ENCODE measurements at regions of chr1 and their contacts with region 1.

Region 1: DNA sequence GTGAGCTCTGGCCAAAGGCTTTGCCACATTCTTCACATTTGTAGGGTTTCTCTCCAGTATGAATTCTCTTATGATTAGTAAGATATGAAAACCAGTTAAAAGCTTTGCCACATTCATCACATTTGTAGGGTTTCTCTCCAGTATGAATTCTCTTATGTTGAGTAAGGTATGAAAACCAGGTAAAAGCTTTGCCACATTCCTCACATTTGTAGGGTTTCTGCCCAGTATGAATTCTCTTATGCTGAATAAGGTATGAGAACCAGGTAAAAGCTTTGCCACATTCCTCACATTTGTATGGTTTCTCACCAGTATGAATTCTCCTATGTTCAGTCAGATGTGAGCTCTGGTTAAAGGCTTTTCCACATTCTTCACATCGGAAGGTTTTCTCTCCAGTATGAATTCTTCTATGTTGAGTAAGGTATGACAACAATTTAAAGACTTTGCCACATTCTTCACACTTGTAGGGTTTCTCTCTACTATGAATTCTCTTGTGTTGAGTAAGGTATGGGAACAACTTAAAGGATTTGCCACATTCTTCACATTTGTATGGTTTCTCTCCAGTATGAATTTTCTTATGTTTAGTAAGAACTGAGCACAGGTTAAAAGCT is 20.7 kb downstream of the ZNF695 start:
- DNase-seq: no peak
- ATAC-seq: no peak
- H3K4me3 ChIP-seq: no peak overlapping the region
- H3K27ac ChIP-seq: no peak overlapping the region
- H3K4me1 ChIP-seq: no peaks in the 10 kb centered on the region
- H3K27me3 ChIP-seq: no peaks in the 10 kb centered on the region
- CTCF ChIP-seq: no peak

Region 2: GRCh38 chr1:247054992-247055415 is 67.8 kb after region 1 on chr1:
- CTCF ChIA-PET with region 1: no interaction called
- POLR2A ChIA-PET with region 1: no interaction called
- in situ Hi-C with region 1: no loop called
- intact Hi-C with region 1: loop called (anchors 10 kb)
- DNase-seq: no peak
- ATAC-seq: no peak
- H3K4me3 ChIP-seq: no peak overlapping the region
- H3K27ac ChIP-seq: no peak overlapping the region
- H3K4me1 ChIP-seq: no peaks in the 10 kb centered on the region
- H3K27me3 ChIP-seq: no peaks in the 10 kb centered on the region
- CTCF ChIP-seq: no peak

Region 3: GRCh38 chr1:247078261-247079140 is 91.3 kb after region 1 on chr1 and contains the start of gene ZNF670:
- CTCF ChIA-PET with region 1: no interaction called
- POLR2A ChIA-PET with region 1: no interaction called
- in situ Hi-C with region 1: no loop called
- intact Hi-C with region 1: loop called (anchors 5 kb)
- DNase-seq: peak; percentile 91
- ATAC-seq: peak; percentile 99
- H3K4me3 ChIP-seq: peak within 1 kb of the TSS; percentile 82 to 96
- H3K27ac ChIP-seq: peak within 1 kb of the TSS; percentile 94
- H3K4me1 ChIP-seq: peaks cover 12% of the 10 kb centered on the region
- H3K27me3 ChIP-seq: no peaks in the 10 kb centered on the region
- CTCF ChIP-seq: no peak
- total RNA-seq, gene ZNF670: 6.4 TPM

Measured in Panc1 (cell line).